Mammary epithelial cell (primary cell): ENCODE measurements at regions of chr16 and their contacts with region 1.

Region 1: GRCh38 chr16:68951991-68952877 is 108.9 kb downstream of the TANGO6 start:
- DNase-seq: peak; percentile 94
- H3K4me3 ChIP-seq: no peak overlapping the region
- H3K27ac ChIP-seq: peak overlapping the region; percentile 79
- H3K4me1 ChIP-seq: peaks cover 20% of the 10 kb centered on the region
- H3K27me3 ChIP-seq: no peaks in the 10 kb centered on the region
- CTCF ChIP-seq: no peak

Region 2: GRCh38 chr16:68921654-68922053 is 30.6 kb before region 1 on chr16:
- CTCF ChIA-PET with region 1: no interaction called
- dilution Hi-C with region 1: no loop called
- in situ Hi-C with region 1: no loop called
- intact Hi-C with region 1: loop called (anchors 2 kb)
- DNase-seq: peak; percentile 96
- H3K4me3 ChIP-seq: no peak overlapping the region
- H3K27ac ChIP-seq: peak overlapping the region; percentile 89
- H3K4me1 ChIP-seq: peaks cover 43% of the 10 kb centered on the region
- H3K27me3 ChIP-seq: no peaks in the 10 kb centered on the region
- CTCF ChIP-seq: no peak

Region 3: DNA sequence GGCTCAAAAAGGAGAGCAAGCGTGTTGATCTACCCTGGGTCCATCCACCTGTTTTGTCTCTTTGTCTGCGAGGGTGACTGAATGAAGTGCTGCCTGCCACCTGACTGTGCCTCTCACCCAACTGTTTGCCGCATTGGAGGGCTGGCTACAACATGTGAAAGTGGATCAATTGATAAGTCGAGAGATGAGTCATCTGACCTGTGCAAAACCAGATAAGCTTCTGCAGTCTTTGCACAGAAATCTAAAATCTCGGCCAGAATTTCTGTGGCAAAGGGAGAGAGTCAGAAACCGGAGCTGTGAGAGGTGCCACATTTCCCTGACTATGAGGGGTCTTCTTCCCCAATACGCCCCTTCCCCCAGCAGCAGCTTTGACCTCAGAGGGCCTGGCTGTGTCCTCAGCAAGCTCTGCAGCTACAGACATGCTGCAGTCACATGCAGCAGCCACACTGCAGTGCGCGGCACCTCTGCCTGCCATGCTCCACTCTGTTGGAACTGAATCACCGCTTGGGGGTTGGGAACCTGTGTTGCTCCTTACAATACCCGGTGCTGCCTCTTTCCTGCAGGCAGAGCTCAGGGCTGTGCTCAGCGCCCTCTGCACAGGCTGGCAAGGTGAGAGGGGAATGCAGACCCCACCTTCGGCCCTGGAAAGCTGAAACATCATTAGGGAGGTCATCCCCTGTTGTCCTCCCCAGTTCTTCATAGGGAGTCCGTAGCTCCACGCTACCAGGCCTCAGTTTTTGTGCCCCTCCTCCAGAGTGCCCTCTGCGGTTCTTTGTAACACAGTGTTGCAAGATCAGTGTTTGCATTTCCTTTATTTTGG is 137.1 kb after region 1 on chr16:
- CTCF ChIA-PET with region 1: interaction called, 11 read pairs
- dilution Hi-C with region 1: no loop called
- in situ Hi-C with region 1: no loop called
- intact Hi-C with region 1: no loop called
- DNase-seq: no peak
- H3K4me3 ChIP-seq: no peak overlapping the region
- H3K27ac ChIP-seq: no peak overlapping the region
- H3K4me1 ChIP-seq: no peaks in the 10 kb centered on the region
- H3K27me3 ChIP-seq: no peaks in the 10 kb centered on the region
- CTCF ChIP-seq: no peak